IMR-90 (cell line): ENCODE measurements at regions of chr4 and their contacts with region 1.

Region 1: GRCh38 chr4:56799824-56800756 is 21.4 kb downstream of the SPINK2 start:
- DNase-seq: peak; percentile 86
- ATAC-seq: peak; percentile 99
- H3K4me3 ChIP-seq: peak overlapping the region; percentile 83
- H3K27ac ChIP-seq: peak overlapping the region; percentile 51
- H3K4me1 ChIP-seq: no peaks in the 10 kb centered on the region
- H3K27me3 ChIP-seq: peaks cover 4% of the 10 kb centered on the region
- CTCF ChIP-seq: peak; percentile 98
- POLR2A ChIP-seq: no peak
- RAD21 ChIP-seq: peak; percentile 99

Region 2: DNA sequence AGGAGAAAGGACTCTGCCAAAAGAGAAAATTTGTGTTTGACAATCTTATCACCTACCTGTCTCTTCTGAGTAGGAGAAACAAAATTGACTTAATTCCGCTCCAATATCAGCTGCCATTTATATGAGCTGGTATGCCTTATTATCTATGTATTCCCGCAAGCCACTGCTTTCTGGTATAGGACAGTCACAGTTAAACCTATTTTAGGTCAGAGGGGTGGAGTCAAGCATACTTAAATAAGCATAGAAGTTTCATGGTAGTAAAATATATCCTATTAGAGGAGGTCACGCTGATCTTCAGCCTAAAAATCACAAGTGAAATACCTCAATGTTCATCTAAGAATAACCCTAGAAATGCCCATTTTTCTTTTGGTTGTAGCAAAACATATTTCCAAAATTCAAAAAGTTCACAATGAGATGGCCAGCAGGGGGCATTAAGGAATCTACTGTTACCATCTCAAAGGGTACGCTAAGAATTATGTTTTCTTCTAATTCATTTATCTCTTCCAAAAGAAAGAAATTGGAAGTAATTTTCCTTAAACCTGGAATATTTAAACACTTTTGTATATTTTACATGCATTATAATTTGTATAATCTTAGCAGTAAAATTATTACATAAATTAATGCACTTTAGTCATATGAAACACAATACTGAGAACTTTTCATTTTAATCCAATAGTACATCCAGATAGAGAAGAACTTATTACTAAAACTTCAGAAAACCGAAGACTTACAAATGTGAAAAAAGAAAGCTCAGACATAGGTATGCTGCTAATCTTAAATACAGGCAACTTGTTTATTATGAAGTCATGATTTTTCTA is 375.2 kb before region 1 on chr4:
- CTCF ChIA-PET with region 1: no interaction called
- POLR2A ChIA-PET with region 1: no interaction called
- dilution Hi-C with region 1: no loop called
- in situ Hi-C with region 1: no loop called
- intact Hi-C with region 1: loop called (anchors 1 kb)
- DNase-seq: peak; percentile 45
- ATAC-seq: peak; percentile 67
- H3K4me3 ChIP-seq: no peak overlapping the region
- H3K27ac ChIP-seq: no peak overlapping the region
- H3K4me1 ChIP-seq: no peaks in the 10 kb centered on the region
- H3K27me3 ChIP-seq: no peaks in the 10 kb centered on the region
- CTCF ChIP-seq: peak; percentile 65
- POLR2A ChIP-seq: no peak
- RAD21 ChIP-seq: peak; percentile 53

Region 3: DNA sequence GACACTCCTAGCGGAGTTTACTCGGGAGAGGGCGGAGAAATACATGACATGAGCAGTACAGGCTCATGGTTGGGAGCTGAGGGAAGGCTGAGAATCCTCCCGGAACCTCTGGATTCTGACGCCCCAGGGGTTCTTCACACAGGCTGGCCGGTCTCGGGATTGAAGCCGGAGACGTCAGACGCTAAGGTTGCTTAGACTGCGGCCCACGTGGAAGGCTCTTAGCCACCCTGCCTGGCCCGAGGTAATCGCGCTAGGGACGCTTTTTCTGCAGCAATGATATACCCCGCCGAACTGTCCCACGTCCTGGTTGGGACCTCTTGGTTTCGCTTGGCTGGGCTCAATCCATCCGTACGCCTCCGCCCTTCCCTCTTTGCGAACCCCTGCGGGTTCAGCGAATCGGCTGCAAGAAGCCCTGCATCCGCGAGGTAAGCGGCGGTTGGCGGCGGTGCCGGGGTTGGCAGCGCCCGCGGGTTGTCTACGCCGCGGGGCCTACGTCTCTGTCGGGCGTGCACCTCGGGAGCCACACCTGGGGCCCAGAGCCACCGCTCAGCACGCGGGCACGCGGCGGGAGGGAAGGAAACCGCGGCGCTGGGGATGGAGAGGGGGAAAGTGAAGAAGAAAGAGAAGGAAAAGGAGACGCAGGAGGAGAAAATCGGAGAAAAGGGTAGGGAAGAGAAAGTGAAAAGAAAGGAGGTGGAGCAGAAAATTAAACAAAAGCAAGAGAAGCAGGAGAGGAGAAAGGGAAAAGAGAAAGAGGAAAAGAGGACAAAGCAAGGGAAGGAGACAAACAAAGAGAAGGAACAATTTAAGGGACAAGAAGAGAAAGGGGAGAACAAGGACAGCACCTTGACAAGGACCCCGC is 294.6 kb before region 1 on chr4 and contains the start of gene ARL9:
- CTCF ChIA-PET with region 1: no interaction called
- POLR2A ChIA-PET with region 1: no interaction called
- dilution Hi-C with region 1: no loop called
- in situ Hi-C with region 1: no loop called
- intact Hi-C with region 1: loop called (anchors 2 kb)
- DNase-seq: peak; percentile 40
- ATAC-seq: peak; percentile 78
- H3K4me3 ChIP-seq: peak within 1 kb of the TSS; percentile 57
- H3K27ac ChIP-seq: no peak within 1 kb of the TSS
- H3K4me1 ChIP-seq: peaks cover 3% of the 10 kb centered on the region; the same call in 1 of the 2 replicates
- H3K27me3 ChIP-seq: no peaks in the 10 kb centered on the region
- CTCF ChIP-seq: no peak
- POLR2A ChIP-seq: no peak
- RAD21 ChIP-seq: no peak
- total RNA-seq, gene ARL9: 0.18 and 0.28 TPM in 2 replicates

Region 4: DNA sequence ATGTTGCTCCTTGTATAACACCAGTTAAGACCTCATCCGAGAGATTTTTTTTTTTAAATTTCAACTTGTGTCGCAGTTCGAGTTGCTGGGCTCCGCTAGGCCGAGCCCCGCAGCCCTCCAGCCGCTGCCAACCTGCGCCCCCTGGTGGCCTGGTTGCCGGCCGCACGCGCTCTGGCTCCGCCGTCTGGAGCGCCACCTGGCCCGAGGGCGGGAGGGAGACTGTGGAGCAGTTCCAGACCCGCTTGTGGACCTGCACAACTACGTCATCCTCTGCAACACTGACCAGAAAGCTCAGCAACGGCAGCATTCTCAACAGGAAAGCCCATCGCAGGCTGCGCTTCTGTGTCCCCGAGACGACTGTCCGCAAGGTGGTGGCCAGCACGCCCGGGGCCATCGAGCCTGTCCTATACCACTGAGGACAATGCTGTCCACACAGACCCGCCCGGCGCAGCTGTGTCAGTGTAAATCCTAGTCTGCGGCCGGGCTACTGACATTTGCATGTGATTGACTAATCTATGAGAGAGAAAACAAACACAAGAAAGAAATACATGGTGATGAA is 255.4 kb before region 1 on chr4:
- CTCF ChIA-PET with region 1: interaction called, 3 read pairs
- POLR2A ChIA-PET with region 1: no interaction called
- dilution Hi-C with region 1: no loop called
- in situ Hi-C with region 1: no loop called
- intact Hi-C with region 1: loop called (anchors 1 kb)
- DNase-seq: peak; percentile 84
- ATAC-seq: peak; percentile 99
- H3K4me3 ChIP-seq: peak overlapping the region; percentile 49
- H3K27ac ChIP-seq: no peak overlapping the region
- H3K4me1 ChIP-seq: no peaks in the 10 kb centered on the region
- H3K27me3 ChIP-seq: no peaks in the 10 kb centered on the region
- CTCF ChIP-seq: peak; percentile 98
- POLR2A ChIP-seq: no peak
- RAD21 ChIP-seq: peak; percentile 74

Region 5: DNA sequence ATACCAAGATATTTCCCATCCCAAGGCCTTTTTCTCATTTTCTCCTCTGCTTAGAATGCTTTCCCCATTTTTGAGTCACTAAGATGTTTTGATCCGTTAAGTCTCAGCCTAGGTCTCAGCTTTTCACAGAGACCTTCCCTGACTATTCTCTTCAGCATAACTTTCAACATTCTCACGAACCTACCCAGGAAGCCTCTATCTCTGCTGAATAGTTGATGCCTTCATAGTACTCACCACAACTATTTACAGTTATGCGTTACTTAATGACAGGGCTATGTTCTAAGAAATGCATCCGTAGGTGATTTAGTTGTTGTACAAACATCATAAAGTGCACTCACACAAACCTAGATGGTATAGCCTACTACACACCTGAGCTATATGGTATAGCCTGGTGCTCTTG is 230.0 kb before region 1 on chr4:
- CTCF ChIA-PET with region 1: interaction called, 14 read pairs
- POLR2A ChIA-PET with region 1: no interaction called
- dilution Hi-C with region 1: no loop called
- in situ Hi-C with region 1: loop called (anchors 5 kb)
- intact Hi-C with region 1: no loop called
- DNase-seq: peak; percentile 47
- ATAC-seq: no peak
- H3K4me3 ChIP-seq: no peak overlapping the region
- H3K27ac ChIP-seq: no peak overlapping the region
- H3K4me1 ChIP-seq: no peaks in the 10 kb centered on the region
- H3K27me3 ChIP-seq: no peaks in the 10 kb centered on the region
- CTCF ChIP-seq: no peak
- POLR2A ChIP-seq: no peak
- RAD21 ChIP-seq: no peak

Region 6: GRCh38 chr4:56575820-56576429 is 224.2 kb before region 1 on chr4:
- CTCF ChIA-PET with region 1: interaction called, 14 read pairs
- POLR2A ChIA-PET with region 1: no interaction called
- dilution Hi-C with region 1: no loop called
- in situ Hi-C with region 1: no loop called
- intact Hi-C with region 1: loop called (anchors 1 kb)
- DNase-seq: peak; percentile 63
- ATAC-seq: peak; percentile 94
- H3K4me3 ChIP-seq: no peak overlapping the region
- H3K27ac ChIP-seq: no peak overlapping the region
- H3K4me1 ChIP-seq: no peaks in the 10 kb centered on the region
- H3K27me3 ChIP-seq: no peaks in the 10 kb centered on the region
- CTCF ChIP-seq: peak; percentile 67
- POLR2A ChIP-seq: no peak
- RAD21 ChIP-seq: peak; percentile 73

Region 7: DNA sequence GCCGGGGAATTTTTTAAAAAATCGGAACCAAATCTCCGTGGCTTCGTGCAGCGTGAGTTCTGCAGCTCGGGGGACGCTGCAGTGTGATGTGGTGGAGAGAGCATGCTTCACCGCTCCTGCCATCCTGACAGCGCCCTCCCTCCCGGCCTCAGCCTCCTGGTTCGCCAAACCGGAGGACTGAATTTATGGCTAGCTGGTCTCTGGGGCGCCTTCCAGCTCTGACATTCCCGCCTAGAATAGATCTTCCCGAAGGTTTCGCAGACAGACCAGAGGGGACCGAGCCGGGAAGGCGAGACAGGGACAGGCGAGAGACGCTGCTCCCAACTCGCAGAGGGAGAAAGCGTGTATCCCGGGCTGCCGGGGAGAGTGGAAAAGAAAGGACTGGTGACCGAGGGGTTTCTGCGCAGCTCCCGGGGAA is 144.9 kb before region 1 on chr4:
- CTCF ChIA-PET with region 1: no interaction called
- POLR2A ChIA-PET with region 1: no interaction called
- dilution Hi-C with region 1: no loop called
- in situ Hi-C with region 1: no loop called
- intact Hi-C with region 1: loop called (anchors 5 kb)
- DNase-seq: peak; percentile 12
- ATAC-seq: peak; percentile 70
- H3K4me3 ChIP-seq: peak overlapping the region; percentile 51
- H3K27ac ChIP-seq: no peak overlapping the region
- H3K4me1 ChIP-seq: peaks cover 2% of the 10 kb centered on the region; the same call in 1 of the 2 replicates
- H3K27me3 ChIP-seq: peaks cover 43% of the 10 kb centered on the region
- CTCF ChIP-seq: no peak
- POLR2A ChIP-seq: no peak
- RAD21 ChIP-seq: no peak